Activated CD4-positive, alpha-beta memory T cell treated with anti-CD3 and anti-CD28 coated beads for 36 hours (primary cell): ENCODE measurements at regions of chr3 and their contacts with region 1.

Region 1: GRCh38 chr3:151168269-151169094 is 34.5 kb downstream of the GPR171 start:
- DNase-seq: peak; percentile 89
- H3K4me3 Mint-ChIP-seq: no peak overlapping the region
- H3K27ac Mint-ChIP-seq: no peak overlapping the region
- H3K4me1 Mint-ChIP-seq: peaks cover 42% of the 10 kb centered on the region
- H3K27me3 Mint-ChIP-seq: peaks cover 2% of the 10 kb centered on the region

Region 2: GRCh38 chr3:150936693-150937092 is 231.8 kb before region 1 on chr3:
- CTCF ChIA-PET with region 1: no interaction called
- POLR2A ChIA-PET with region 1: no interaction called
- intact Hi-C with region 1: no loop called
- DNase-seq: no peak
- H3K4me3 Mint-ChIP-seq: no peak overlapping the region
- H3K27ac Mint-ChIP-seq: no peak overlapping the region
- H3K4me1 Mint-ChIP-seq: no peaks in the 10 kb centered on the region
- H3K27me3 Mint-ChIP-seq: peaks cover 19% of the 10 kb centered on the region

Region 3: DNA sequence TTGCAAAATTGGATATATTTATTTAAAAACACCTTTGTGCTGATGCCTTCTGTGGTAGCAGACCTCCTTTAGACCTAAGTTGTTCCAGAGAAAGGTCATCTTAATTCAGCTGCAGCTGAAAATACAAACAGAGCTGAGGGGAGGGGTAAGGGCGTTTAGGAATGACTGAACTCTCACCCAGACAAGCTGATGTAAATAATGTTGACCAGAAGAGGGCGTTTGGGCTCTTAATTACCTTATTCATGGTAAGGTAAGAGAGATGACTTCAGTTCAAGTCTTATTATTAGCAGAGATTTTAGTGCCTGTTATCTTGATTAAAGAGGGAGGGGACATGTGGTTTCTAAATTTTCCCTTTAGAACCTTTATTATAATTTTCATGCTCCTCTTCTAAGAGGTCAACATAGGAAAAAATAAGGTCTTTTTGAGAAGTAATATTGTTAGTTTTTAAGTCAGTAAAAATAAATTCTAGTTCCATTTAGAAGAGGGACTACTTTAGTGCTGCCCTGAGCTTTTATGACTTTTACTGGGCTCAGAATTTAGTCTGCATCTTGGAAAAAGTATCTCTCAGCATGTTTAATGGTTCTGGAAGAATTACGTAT is 11.8 kb before region 1 on chr3:
- CTCF ChIA-PET with region 1: interaction called, 13 read pairs
- POLR2A ChIA-PET with region 1: no interaction called
- intact Hi-C with region 1: no loop called
- DNase-seq: no peak
- H3K4me3 Mint-ChIP-seq: no peak overlapping the region
- H3K27ac Mint-ChIP-seq: no peak overlapping the region
- H3K4me1 Mint-ChIP-seq: no peaks in the 10 kb centered on the region
- H3K27me3 Mint-ChIP-seq: no peaks in the 10 kb centered on the region

Region 4: DNA sequence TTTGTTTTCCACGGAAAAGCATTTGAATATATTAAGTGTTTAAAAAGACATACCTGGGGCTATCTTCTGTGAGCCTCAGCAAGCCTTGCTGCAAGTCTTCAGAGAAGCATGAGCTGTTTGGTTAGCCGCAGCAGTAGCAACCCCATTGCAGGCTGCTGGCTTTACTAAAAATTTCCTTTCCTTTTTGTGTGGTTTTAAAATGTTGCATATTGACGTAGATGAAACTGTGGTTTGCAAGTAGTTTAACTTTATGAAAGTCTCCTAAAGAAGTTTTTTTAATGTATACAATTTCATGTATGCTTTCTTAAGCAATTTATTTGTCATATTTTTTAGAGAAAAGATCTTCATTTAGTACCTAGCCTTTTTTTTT is 34.6 kb after region 1 on chr3 and contains the start of gene GPR171:
- CTCF ChIA-PET with region 1: interaction called, 43 read pairs
- POLR2A ChIA-PET with region 1: interaction called, 17 read pairs
- intact Hi-C with region 1: loop called (anchors 1 kb)
- DNase-seq: peak; percentile 84
- H3K4me3 Mint-ChIP-seq: peak within 1 kb of the TSS; percentile 86
- H3K27ac Mint-ChIP-seq: peak within 1 kb of the TSS; percentile 99
- H3K4me1 Mint-ChIP-seq: peaks cover 65% of the 10 kb centered on the region
- H3K27me3 Mint-ChIP-seq: no peaks in the 10 kb centered on the region
- total RNA-seq, gene GPR171: 70.7 to 74.0 TPM

Region 5: GRCh38 chr3:151234825-151235224 is 66.3 kb after region 1 on chr3:
- CTCF ChIA-PET with region 1: interaction called, 13 read pairs
- POLR2A ChIA-PET with region 1: no interaction called
- intact Hi-C with region 1: no loop called
- DNase-seq: no peak
- H3K4me3 Mint-ChIP-seq: no peak overlapping the region
- H3K27ac Mint-ChIP-seq: no peak overlapping the region
- H3K4me1 Mint-ChIP-seq: peaks cover 11% of the 10 kb centered on the region
- H3K27me3 Mint-ChIP-seq: no peaks in the 10 kb centered on the region

Region 6: GRCh38 chr3:151290673-151291072 is 122.2 kb after region 1 on chr3:
- CTCF ChIA-PET with region 1: interaction called, 48 read pairs
- POLR2A ChIA-PET with region 1: no interaction called
- intact Hi-C with region 1: no loop called
- DNase-seq: no peak
- H3K4me3 Mint-ChIP-seq: no peak overlapping the region
- H3K27ac Mint-ChIP-seq: no peak overlapping the region
- H3K4me1 Mint-ChIP-seq: no peaks in the 10 kb centered on the region
- H3K27me3 Mint-ChIP-seq: peaks cover 9% of the 10 kb centered on the region

Region 7: DNA sequence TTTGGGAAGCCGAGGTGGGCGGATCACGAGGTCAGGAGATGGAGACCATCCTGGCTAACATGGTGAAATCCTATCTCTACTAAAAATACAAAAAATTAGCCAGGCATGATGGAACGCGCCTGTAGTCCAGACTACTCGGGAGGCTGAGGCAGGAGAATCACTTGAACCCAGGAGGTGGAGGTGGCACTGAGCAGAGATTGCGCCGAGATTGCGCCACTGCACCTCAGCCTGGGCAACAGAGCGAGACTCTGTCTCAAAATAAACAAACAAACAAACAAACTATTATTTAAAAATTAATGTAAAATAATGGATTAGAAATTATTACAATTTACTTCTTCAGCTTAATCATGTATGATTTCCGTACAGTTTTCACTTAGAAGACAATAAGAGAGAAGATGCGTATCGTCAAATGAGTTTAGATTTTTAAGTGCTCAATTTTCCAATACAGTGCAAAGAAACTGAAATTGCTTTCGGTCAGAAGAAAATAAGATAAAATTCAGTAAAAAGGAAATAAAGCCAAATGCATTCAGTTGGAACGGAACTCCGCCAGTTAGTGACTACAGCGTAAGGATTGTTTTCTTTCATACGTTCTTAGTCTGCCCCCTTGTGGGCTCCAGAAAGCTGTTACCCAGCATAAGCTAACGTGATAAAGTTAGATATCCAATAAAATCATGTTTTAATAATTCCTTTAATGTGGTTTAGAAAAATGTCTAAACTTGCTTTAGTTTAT is 670.3 kb after region 1 on chr3:
- CTCF ChIA-PET with region 1: interaction called, 13 read pairs
- POLR2A ChIA-PET with region 1: no interaction called
- intact Hi-C with region 1: loop called (anchors 5 kb)
- DNase-seq: peak; percentile 30
- H3K4me3 Mint-ChIP-seq: no peak overlapping the region
- H3K27ac Mint-ChIP-seq: no peak overlapping the region
- H3K4me1 Mint-ChIP-seq: peaks cover 3% of the 10 kb centered on the region
- H3K27me3 Mint-ChIP-seq: peaks cover 5% of the 10 kb centered on the region